IMR-90 (cell line): ENCODE measurements at regions of chr15 and their contacts with region 1.

Region 1: DNA sequence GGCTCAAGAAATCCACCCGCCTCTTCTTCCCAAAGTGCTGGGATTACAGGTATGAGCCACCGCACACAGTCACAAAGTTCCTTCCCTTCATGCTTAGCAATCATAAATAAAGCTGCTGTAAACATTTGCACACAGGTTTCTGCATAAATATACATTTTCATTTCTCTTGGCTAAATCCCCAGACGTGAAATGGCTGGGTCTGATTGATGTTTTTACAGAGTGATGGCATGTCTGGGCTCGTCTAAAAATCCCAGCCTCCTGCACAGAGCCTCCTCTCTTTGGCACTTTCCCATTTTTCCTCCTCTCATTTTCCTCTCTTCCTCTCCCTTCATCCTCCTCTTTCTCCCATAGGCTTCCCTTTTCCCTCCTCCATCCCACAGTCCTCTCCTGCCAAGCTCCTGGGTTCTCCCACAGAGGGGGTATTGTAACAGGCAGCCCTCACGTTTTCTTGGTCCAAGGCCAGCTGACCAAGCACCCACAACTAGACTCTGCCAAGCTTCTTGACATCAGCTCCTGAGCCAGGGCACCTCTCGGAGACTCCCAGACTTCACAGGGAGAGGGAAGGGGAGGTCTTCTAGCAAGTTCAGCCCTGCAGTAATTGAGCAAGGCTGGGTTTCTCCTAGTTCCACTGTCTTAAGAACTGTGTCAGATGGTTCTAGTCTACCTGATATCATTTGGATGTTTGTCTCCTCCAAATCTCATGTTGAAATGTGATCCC is 10.5 kb upstream of the PLA2G4E start:
- DNase-seq: no peak
- ATAC-seq: no peak
- H3K4me3 ChIP-seq: no peak overlapping the region
- H3K27ac ChIP-seq: no peak overlapping the region
- H3K4me1 ChIP-seq: no peaks in the 10 kb centered on the region
- H3K27me3 ChIP-seq: peaks cover 57% of the 10 kb centered on the region
- CTCF ChIP-seq: no peak
- POLR2A ChIP-seq: no peak
- RAD21 ChIP-seq: no peak

Region 2: GRCh38 chr15:41999290-42000285 is 31.8 kb before region 1 on chr15:
- CTCF ChIA-PET with region 1: no interaction called
- POLR2A ChIA-PET with region 1: no interaction called
- dilution Hi-C with region 1: no loop called
- in situ Hi-C with region 1: no loop called
- intact Hi-C with region 1: loop called (anchors 1 kb)
- DNase-seq: no peak
- ATAC-seq: no peak
- H3K4me3 ChIP-seq: no peak overlapping the region
- H3K27ac ChIP-seq: no peak overlapping the region
- H3K4me1 ChIP-seq: no peaks in the 10 kb centered on the region
- H3K27me3 ChIP-seq: peaks cover 68% of the 10 kb centered on the region
- CTCF ChIP-seq: no peak
- POLR2A ChIP-seq: no peak
- RAD21 ChIP-seq: no peak

Region 3: GRCh38 chr15:42080585-42081462 is 49.5 kb after region 1 on chr15:
- CTCF ChIA-PET with region 1: no interaction called
- POLR2A ChIA-PET with region 1: no interaction called
- dilution Hi-C with region 1: no loop called
- in situ Hi-C with region 1: no loop called
- intact Hi-C with region 1: no loop called
- DNase-seq: peak; percentile 41
- ATAC-seq: peak; percentile 23; the same call in 1 of the 2 replicates
- H3K4me3 ChIP-seq: no peak overlapping the region
- H3K27ac ChIP-seq: no peak overlapping the region
- H3K4me1 ChIP-seq: no peaks in the 10 kb centered on the region
- H3K27me3 ChIP-seq: peaks cover 68% of the 10 kb centered on the region
- CTCF ChIP-seq: no peak
- POLR2A ChIP-seq: no peak
- RAD21 ChIP-seq: no peak